ENCODE measurements at regions of chr11 and their contacts with region 1.

Region 1: GRCh38 chr11:118610804-118611795 is 3.7 kb downstream of the PHLDB1 start:
- DNase-seq: peak; percentile 85
- ATAC-seq: peak; percentile 21 to 35

Region 2: GRCh38 chr11:118574636-118575035 is 36.5 kb before region 1 on chr11:
- intact Hi-C with region 1: loop called in 1 of 2 experiments (anchors 5 kb)
- DNase-seq: no peak
- ATAC-seq: no peak

Region 3: DNA sequence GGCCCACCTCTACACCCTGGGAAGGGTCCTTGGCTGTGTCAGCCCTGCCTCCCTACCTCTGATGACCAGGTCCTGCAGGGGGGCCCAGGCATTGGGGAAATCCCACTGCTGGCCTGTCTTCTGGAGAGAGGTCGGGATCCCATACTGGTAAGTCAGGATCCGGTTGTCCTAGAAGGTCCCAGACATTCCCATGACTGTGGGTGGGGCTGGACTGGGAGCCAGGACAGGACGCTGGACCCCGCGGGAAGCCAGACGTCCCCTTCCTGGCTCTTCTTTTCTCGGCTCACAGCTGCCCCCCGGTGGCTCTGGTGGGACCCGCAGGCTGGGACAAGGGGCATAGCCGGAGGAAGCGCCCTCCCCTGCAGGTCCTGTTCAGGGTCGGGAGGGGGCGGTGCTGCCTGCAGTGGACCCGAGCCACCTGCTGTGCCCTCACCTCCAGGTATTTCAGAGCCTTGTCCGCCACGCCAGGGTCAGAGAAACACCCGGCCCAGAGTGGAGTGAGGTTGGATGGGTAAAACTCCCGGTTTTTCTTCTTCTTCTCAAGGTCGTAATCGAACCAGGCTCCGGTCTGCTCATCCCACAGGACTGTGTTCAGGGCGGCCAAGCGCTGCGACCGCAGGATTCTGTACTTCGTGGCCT is 48.3 kb after region 1 on chr11:
- intact Hi-C with region 1: loop called in 1 of 2 experiments (anchors 5 kb)
- DNase-seq: peak; percentile 93
- ATAC-seq: peak; percentile 76 to 85